HAP-1 (cell line): ENCODE measurements at regions of chr2 and their contacts with region 1.

Region 1: DNA sequence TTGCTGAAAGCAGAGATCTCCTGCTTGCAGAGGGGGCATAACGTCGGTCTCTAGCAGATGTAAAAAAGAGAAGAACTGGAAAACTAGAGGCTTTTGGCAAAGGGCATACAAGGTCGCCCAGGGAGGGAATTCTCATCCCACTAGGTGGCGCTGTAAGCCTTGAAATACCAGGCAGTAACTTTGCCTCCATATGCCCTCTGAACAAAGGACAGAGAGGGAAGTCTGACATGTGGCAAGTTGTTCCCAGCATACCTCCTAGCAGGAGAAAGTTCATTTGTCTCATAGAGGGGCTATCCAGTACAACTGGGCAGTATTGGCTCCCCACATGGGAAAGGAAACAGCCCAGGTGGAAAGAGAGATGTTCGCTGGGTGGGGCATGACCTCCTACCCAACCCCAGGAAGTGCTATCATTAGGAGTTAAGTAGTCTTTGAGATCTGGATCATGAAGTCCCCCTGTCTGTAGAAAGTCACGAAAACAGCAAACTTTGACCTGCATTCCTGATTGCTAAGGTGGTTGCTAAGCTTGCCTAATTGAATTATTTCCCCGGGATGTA is 39.9 kb downstream of the STK17B start:
- DNase-seq: peak; percentile 73 to 88
- H3K4me3 ChIP-seq: no peak overlapping the region
- H3K4me1 ChIP-seq: no peaks in the 10 kb centered on the region
- H3K27me3 ChIP-seq: 0 out of 2 replicates have a peak, but pooled peaks cover 4% of the 10 kb centered on the region

Region 2: GRCh38 chr2:194395818-194396217 is 1735.6 kb before region 1 on chr2:
- in situ Hi-C with region 1: no loop called
- DNase-seq: no peak
- H3K4me3 ChIP-seq: no peak overlapping the region
- H3K4me1 ChIP-seq: peaks cover 10% of the 10 kb centered on the region; the same call in 1 of the 2 replicates
- H3K27me3 ChIP-seq: no peaks in the 10 kb centered on the region

Region 3: GRCh38 chr2:196277002-196277401 is 145.5 kb after region 1 on chr2:
- in situ Hi-C with region 1: loop called (anchors 10 kb)
- DNase-seq: no peak
- H3K4me3 ChIP-seq: no peak overlapping the region
- H3K4me1 ChIP-seq: no peaks in the 10 kb centered on the region
- H3K27me3 ChIP-seq: no peaks in the 10 kb centered on the region

Region 4: DNA sequence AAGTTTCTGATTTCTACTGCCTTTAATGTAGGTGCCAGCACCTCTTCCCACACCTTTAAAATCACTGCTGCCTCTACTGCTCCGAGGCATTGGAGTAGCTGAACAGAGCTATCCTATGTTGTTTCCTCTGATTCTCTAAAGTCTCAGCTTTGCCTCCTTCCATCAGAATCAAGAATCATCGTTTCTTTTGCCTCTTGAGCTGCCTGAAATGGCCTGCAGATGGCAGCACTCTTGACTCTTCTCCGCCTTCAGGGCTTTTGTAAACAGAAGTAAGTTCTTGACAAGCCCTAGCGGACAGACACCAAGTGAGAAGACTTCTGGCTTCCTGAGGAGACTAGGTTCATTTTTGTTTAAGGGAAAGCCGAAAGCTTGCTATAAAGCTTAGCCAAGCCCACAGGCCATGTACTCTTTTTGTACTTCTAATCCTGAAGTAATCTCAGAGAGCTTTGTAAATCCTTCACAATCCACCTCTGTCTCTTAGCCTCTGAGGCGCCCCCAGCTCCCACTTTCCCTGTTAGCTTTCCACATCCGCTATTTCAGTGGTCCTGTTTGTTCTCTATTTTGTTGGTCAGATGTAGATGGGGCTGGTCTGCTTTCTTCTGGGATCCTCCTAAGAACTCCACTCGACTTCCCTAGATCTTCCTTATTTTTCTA is 619.6 kb after region 1 on chr2:
- in situ Hi-C with region 1: loop called (anchors 10 kb)
- DNase-seq: peak; percentile 71 to 79
- H3K4me3 ChIP-seq: no peak overlapping the region
- H3K4me1 ChIP-seq: no peaks in the 10 kb centered on the region; the same call in 1 of the 2 replicates
- H3K27me3 ChIP-seq: no peaks in the 10 kb centered on the region